IMR-90 (cell line): ENCODE measurements at regions of chr17 and their contacts with region 1.

Region 1: DNA sequence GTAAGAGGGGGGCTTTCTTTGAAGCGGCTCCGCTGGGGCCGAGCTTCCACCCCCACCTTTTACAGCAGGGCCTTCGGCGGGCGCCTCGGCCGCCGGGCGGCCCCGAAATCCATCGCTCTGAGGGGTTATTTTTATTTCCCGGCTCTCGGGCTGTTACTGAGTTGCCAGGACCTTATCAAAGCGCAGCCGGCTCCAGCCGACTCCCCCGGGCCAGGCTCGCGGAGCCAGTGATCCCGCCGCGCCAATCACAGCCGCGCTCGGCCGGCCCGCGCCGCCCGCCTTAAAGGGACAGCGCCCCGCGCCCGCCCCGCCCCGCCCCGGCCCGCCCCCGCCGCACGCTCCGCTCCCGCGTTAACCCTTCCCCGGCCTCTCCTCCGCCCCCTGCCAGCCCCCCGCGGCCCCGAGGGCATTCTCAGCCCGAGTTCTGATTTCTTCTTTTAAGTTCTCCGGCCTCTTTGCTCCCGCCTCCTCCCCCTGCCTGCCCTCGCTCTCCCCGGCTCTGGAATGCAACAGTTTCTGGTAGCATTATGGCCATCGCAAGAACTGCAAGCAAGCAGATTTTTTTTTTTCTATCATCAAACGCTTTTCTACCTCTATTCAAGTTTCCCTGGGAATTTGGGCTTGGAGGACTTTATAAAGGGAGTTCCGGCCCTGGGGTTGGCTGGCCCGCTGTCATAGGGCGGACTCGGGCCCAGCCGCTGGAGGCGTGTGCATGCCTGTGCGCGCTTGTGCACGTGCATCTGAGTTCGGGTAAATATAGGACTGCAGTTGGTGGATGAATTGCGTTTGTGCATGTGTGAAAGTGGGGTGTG is at the start of gene AXIN2:
- DNase-seq: peak; percentile 85
- ATAC-seq: peak; percentile 91
- H3K4me3 ChIP-seq: peak within 1 kb of the TSS; percentile 57
- H3K27ac ChIP-seq: peak within 1 kb of the TSS; percentile 53
- H3K4me1 ChIP-seq: peaks cover 5% of the 10 kb centered on the region; the same call in 1 of the 2 replicates
- H3K27me3 ChIP-seq: peaks cover 19% of the 10 kb centered on the region
- CTCF ChIP-seq: no peak; the same call in 1 of the 2 replicates
- POLR2A ChIP-seq: no peak
- RAD21 ChIP-seq: no peak; the same call in 1 of the 2 replicates
- total RNA-seq, gene AXIN2: 1.8 and 1.9 TPM in 2 replicates

Region 2: DNA sequence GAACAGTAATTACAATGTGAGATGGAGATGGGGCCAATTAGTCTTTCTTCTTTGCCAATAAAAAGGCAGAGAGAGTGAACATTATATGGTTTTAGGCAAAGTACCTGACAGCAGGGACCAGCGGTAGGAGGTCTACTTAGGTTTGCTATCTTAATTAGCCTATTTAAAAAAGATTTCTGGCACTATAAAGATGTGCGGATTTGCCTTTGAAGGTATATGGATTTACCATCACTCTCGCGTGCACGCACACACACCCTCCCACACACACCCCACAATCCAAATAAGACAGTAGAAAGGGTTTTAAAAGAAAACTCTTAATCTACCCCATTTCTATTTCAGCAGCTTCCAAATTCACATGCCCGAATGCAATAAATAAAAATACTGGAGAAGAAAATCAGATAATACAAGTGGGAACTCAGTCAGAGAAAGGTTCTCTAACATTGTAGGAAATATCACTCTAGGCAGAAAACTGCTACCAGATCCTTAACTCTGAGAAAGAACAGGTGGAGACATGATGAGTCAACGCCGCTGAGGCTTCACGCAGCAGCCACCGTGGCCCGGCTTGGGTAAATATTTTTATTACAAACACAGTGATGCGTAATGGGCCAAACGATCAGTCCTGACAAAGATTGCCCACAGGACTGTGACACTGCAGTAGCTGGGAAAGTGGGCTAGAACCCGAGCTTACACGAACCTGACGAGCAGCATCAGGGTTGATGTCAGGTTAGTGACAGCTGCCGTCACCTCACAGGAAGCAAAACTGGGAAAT is 66.5 kb after region 1 on chr17:
- CTCF ChIA-PET with region 1: no interaction called
- POLR2A ChIA-PET with region 1: no interaction called
- dilution Hi-C with region 1: no loop called
- in situ Hi-C with region 1: no loop called
- intact Hi-C with region 1: no loop called
- DNase-seq: peak; percentile 92
- ATAC-seq: peak; percentile 97
- H3K4me3 ChIP-seq: no peak overlapping the region
- H3K27ac ChIP-seq: no peak overlapping the region
- H3K4me1 ChIP-seq: peaks cover 2% of the 10 kb centered on the region; the same call in 1 of the 2 replicates
- H3K27me3 ChIP-seq: peaks cover 10% of the 10 kb centered on the region
- CTCF ChIP-seq: no peak
- POLR2A ChIP-seq: no peak
- RAD21 ChIP-seq: 0 out of 2 replicates have a peak, but pooled peaks have one; percentile 17

Region 3: GRCh38 chr17:65638221-65638975 is 76.8 kb after region 1 on chr17:
- CTCF ChIA-PET with region 1: no interaction called
- POLR2A ChIA-PET with region 1: no interaction called
- dilution Hi-C with region 1: no loop called
- in situ Hi-C with region 1: no loop called
- intact Hi-C with region 1: no loop called
- DNase-seq: peak; percentile 84
- ATAC-seq: peak; percentile 77
- H3K4me3 ChIP-seq: no peak overlapping the region
- H3K27ac ChIP-seq: no peak overlapping the region
- H3K4me1 ChIP-seq: peaks cover 3% of the 10 kb centered on the region; the same call in 1 of the 2 replicates
- H3K27me3 ChIP-seq: no peaks in the 10 kb centered on the region; the same call in 1 of the 2 replicates
- CTCF ChIP-seq: no peak
- POLR2A ChIP-seq: no peak
- RAD21 ChIP-seq: no peak

Region 4: GRCh38 chr17:65698381-65699061 is 136.9 kb after region 1 on chr17:
- CTCF ChIA-PET with region 1: no interaction called
- POLR2A ChIA-PET with region 1: no interaction called
- dilution Hi-C with region 1: no loop called
- in situ Hi-C with region 1: no loop called
- intact Hi-C with region 1: loop called (anchors 5 kb)
- DNase-seq: peak; percentile 76
- ATAC-seq: peak; percentile 79
- H3K4me3 ChIP-seq: no peak overlapping the region; the same call in 1 of the 2 replicates
- H3K27ac ChIP-seq: no peak overlapping the region
- H3K4me1 ChIP-seq: peaks cover 5% of the 10 kb centered on the region
- H3K27me3 ChIP-seq: no peaks in the 10 kb centered on the region
- CTCF ChIP-seq: no peak
- POLR2A ChIP-seq: no peak
- RAD21 ChIP-seq: no peak

Region 5: DNA sequence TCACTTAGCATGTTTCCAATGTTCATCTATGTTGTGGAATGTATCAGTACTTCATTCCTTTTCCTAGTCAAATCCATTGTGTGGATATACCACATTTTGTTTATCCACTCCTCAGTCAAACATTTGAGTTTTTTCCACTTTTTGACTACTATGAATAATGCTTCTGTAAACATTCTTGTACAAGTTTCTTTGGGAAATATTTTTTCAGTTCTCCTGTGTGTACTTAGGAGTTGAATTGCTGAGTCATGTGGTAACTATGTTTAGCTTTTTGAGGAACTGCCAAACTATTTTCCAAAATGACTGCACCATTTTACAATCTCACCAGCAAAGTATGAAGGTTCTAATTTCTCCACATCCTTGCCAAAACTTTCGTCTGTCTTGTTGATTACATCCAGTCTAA is 223.5 kb after region 1 on chr17:
- CTCF ChIA-PET with region 1: no interaction called
- POLR2A ChIA-PET with region 1: no interaction called
- dilution Hi-C with region 1: no loop called
- in situ Hi-C with region 1: no loop called
- intact Hi-C with region 1: loop called (anchors 2 kb)
- DNase-seq: peak; percentile 97
- ATAC-seq: peak; percentile 87
- H3K4me3 ChIP-seq: no peak overlapping the region
- H3K27ac ChIP-seq: peak overlapping the region; percentile 11; the same call in 1 of the 2 replicates
- H3K4me1 ChIP-seq: peaks cover 4% of the 10 kb centered on the region; the same call in 1 of the 2 replicates
- H3K27me3 ChIP-seq: no peaks in the 10 kb centered on the region
- CTCF ChIP-seq: no peak
- POLR2A ChIP-seq: no peak
- RAD21 ChIP-seq: no peak

Region 6: GRCh38 chr17:65975878-65976277 is 414.3 kb after region 1 on chr17:
- CTCF ChIA-PET with region 1: no interaction called
- POLR2A ChIA-PET with region 1: no interaction called
- dilution Hi-C with region 1: no loop called
- in situ Hi-C with region 1: no loop called
- intact Hi-C with region 1: no loop called
- DNase-seq: no peak
- ATAC-seq: no peak
- H3K4me3 ChIP-seq: no peak overlapping the region
- H3K27ac ChIP-seq: no peak overlapping the region
- H3K4me1 ChIP-seq: no peaks in the 10 kb centered on the region
- H3K27me3 ChIP-seq: no peaks in the 10 kb centered on the region
- CTCF ChIP-seq: no peak
- POLR2A ChIP-seq: no peak
- RAD21 ChIP-seq: no peak

Region 7: GRCh38 chr17:65988081-65988850 is 426.7 kb after region 1 on chr17:
- CTCF ChIA-PET with region 1: no interaction called
- POLR2A ChIA-PET with region 1: no interaction called
- dilution Hi-C with region 1: no loop called
- in situ Hi-C with region 1: no loop called
- intact Hi-C with region 1: loop called (anchors 5 kb)
- DNase-seq: peak; percentile 48
- ATAC-seq: no peak
- H3K4me3 ChIP-seq: no peak overlapping the region
- H3K27ac ChIP-seq: no peak overlapping the region
- H3K4me1 ChIP-seq: no peaks in the 10 kb centered on the region
- H3K27me3 ChIP-seq: no peaks in the 10 kb centered on the region
- CTCF ChIP-seq: peak; percentile 64
- POLR2A ChIP-seq: no peak
- RAD21 ChIP-seq: peak; percentile 85

Region 8: GRCh38 chr17:66165513-66166123 is 604.0 kb after region 1 on chr17:
- CTCF ChIA-PET with region 1: no interaction called
- POLR2A ChIA-PET with region 1: no interaction called
- dilution Hi-C with region 1: no loop called
- in situ Hi-C with region 1: loop called (anchors 25 kb)
- intact Hi-C with region 1: loop called (anchors 1 kb)
- DNase-seq: peak; percentile 75
- ATAC-seq: peak; percentile 92
- H3K4me3 ChIP-seq: no peak overlapping the region
- H3K27ac ChIP-seq: no peak overlapping the region
- H3K4me1 ChIP-seq: no peaks in the 10 kb centered on the region
- H3K27me3 ChIP-seq: no peaks in the 10 kb centered on the region
- CTCF ChIP-seq: peak; percentile 81
- POLR2A ChIP-seq: 0 out of 2 replicates have a peak, but pooled peaks have one; percentile 38
- RAD21 ChIP-seq: peak; percentile 91